CD8-positive, alpha-beta T cell (primary cell): ENCODE measurements at regions of chr16 and their contacts with region 1.

Region 1: GRCh38 chr16:84726079-84726668 is 26.4 kb downstream of the USP10 start:
- DNase-seq: peak; percentile 74 to 92 (median 83)
- ATAC-seq: peak; percentile 76
- H3K4me3 ChIP-seq: no peak overlapping the region
- H3K4me3 Mint-ChIP-seq: peak overlapping the region; percentile 50
- H3K27ac ChIP-seq: no peak overlapping the region
- H3K27ac Mint-ChIP-seq: no peak overlapping the region
- H3K4me1 ChIP-seq: peaks cover 34% of the 10 kb centered on the region
- H3K4me1 Mint-ChIP-seq: peaks cover 64% of the 10 kb centered on the region
- H3K27me3 ChIP-seq: no peaks in the 10 kb centered on the region
- H3K27me3 Mint-ChIP-seq: no peaks in the 10 kb centered on the region
- CTCF ChIP-seq: peak; percentile 98

Region 2: GRCh38 chr16:84647828-84648594 is 78.2 kb before region 1 on chr16 and contains the start of gene KLHL36:
- CTCF ChIA-PET with region 1: interaction called, 18 read pairs
- POLR2A ChIA-PET with region 1: no interaction called
- intact Hi-C with region 1: no loop called
- DNase-seq: peak; percentile 53 to 84 (median 71)
- ATAC-seq: peak; percentile 84
- H3K4me3 ChIP-seq: peak within 1 kb of the TSS; percentile 59 to 63
- H3K4me3 Mint-ChIP-seq: peak within 1 kb of the TSS; percentile 87
- H3K27ac ChIP-seq: peak within 1 kb of the TSS; percentile 44 to 68
- H3K27ac Mint-ChIP-seq: peak within 1 kb of the TSS; percentile 90
- H3K4me1 ChIP-seq: peaks cover 45% of the 10 kb centered on the region
- H3K4me1 Mint-ChIP-seq: peaks cover 44% of the 10 kb centered on the region
- H3K27me3 ChIP-seq: no peaks in the 10 kb centered on the region
- H3K27me3 Mint-ChIP-seq: no peaks in the 10 kb centered on the region
- CTCF ChIP-seq: no peak
- total RNA-seq, gene KLHL36: 50.8 to 56.5 TPM

Region 3: DNA sequence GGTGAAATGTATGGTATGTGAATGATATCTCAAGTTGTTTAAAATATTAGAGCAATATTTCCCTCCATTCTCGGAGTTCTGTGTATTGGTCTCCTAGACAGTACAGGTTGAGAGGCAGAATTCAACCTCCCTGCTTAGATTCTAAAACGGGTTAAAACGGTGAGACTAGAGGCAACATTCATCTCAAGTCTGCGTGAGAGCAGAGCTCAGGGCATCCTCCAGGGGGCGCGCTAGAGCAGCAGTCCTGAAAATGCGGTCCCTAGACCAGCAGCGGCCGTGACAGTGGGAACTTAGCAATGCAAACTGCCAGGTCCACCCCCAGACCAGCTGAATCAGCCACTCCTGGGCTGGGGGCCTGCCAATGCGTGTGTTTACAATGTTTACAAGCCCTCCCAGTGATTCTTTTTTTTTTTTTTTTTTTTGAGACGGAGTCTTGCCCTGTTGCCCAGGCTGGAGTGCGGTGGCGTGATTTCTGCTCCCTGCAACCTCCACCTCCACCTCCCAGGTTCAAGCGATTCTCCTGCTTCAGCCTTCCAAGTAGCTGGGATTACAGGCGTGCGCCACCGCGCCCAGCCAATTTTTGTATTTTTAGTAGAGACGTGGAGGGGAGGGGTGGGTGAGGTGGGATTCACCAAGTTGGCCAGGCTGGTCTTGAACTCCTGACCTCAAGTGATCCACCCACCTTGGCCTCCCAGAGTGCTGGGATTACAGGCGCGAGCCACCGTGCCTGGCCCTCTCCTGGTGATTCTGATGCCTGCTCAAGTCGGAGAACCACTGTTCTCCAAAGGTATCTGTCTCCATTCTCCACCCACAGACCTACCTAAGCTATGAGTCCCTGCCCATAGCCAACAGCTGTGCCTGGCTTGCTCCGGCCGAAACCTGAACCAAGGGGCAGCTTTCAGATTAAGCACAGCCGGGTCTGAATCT is 53.6 kb before region 1 on chr16:
- CTCF ChIA-PET with region 1: interaction called, 49 read pairs
- POLR2A ChIA-PET with region 1: no interaction called
- intact Hi-C with region 1: loop called (anchors 1 kb)
- DNase-seq: peak; percentile 64 to 91 (median 80)
- ATAC-seq: peak; percentile 97
- H3K4me3 ChIP-seq: no peak overlapping the region
- H3K4me3 Mint-ChIP-seq: no peak overlapping the region
- H3K27ac ChIP-seq: no peak overlapping the region
- H3K27ac Mint-ChIP-seq: no peak overlapping the region
- H3K4me1 ChIP-seq: no peaks in the 10 kb centered on the region
- H3K4me1 Mint-ChIP-seq: peaks cover 6% of the 10 kb centered on the region
- H3K27me3 ChIP-seq: no peaks in the 10 kb centered on the region
- H3K27me3 Mint-ChIP-seq: no peaks in the 10 kb centered on the region
- CTCF ChIP-seq: peak; percentile 83

Region 4: DNA sequence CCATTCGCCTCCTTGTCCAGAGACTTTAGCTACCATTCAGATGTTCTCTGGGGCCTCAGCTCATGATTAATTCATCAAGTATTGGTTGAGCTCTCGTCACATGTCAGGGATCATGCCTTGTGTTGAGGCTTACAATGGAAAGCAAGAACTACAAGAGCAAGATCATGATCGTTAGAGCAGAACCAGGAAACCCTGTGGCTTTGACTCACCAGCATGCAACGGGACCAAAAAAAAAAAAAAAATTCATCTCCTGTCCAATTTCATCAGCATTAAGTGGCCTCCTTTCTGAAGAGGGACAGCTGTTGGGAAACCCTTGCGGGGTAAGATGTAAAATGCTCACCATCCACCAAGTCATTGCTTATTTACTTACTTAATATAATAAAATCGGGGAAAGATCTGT is 38.5 kb before region 1 on chr16:
- CTCF ChIA-PET with region 1: interaction called, 15 read pairs
- POLR2A ChIA-PET with region 1: no interaction called
- intact Hi-C with region 1: no loop called
- DNase-seq: peak in 1 of 9 experiments; percentile 15
- ATAC-seq: no peak
- H3K4me3 ChIP-seq: no peak overlapping the region
- H3K4me3 Mint-ChIP-seq: no peak overlapping the region
- H3K27ac ChIP-seq: no peak overlapping the region
- H3K27ac Mint-ChIP-seq: no peak overlapping the region
- H3K4me1 ChIP-seq: no peaks in the 10 kb centered on the region
- H3K4me1 Mint-ChIP-seq: no peaks in the 10 kb centered on the region
- H3K27me3 ChIP-seq: no peaks in the 10 kb centered on the region
- H3K27me3 Mint-ChIP-seq: peaks cover 17% of the 10 kb centered on the region
- CTCF ChIP-seq: no peak

Region 5: DNA sequence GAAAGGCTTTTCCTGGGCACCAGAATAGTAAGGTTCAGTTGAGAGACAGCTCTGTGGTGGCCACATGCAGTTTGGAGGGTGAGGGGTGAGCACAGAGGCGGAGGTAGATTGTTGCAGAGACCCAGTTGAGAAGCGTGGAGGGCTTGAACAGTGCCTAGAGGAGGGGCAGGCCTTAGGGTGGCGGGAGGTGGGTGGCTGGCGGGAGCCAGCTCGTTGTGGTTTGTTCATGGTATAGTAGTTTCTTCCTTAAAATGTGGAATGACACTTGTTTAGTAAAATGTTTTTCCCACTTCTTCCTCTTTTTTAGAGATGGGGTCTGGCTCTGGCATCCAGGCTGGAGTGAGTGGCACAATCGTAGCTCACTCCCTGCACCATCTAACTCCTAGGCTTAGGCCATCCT is 12.1 kb before region 1 on chr16:
- CTCF ChIA-PET with region 1: interaction called, 67 read pairs
- POLR2A ChIA-PET with region 1: interaction called, 3 read pairs
- intact Hi-C with region 1: no loop called
- DNase-seq: no peak
- ATAC-seq: no peak
- H3K4me3 ChIP-seq: no peak overlapping the region
- H3K4me3 Mint-ChIP-seq: no peak overlapping the region
- H3K27ac ChIP-seq: no peak overlapping the region
- H3K27ac Mint-ChIP-seq: peak overlapping the region; percentile 62
- H3K4me1 ChIP-seq: peaks cover 34% of the 10 kb centered on the region
- H3K4me1 Mint-ChIP-seq: peaks cover 87% of the 10 kb centered on the region
- H3K27me3 ChIP-seq: no peaks in the 10 kb centered on the region
- H3K27me3 Mint-ChIP-seq: no peaks in the 10 kb centered on the region
- CTCF ChIP-seq: no peak

Region 6: GRCh38 chr16:84746882-84747281 is 20.7 kb after region 1 on chr16:
- CTCF ChIA-PET with region 1: interaction called, 135 read pairs
- POLR2A ChIA-PET with region 1: no interaction called
- intact Hi-C with region 1: no loop called
- DNase-seq: no peak
- ATAC-seq: no peak
- H3K4me3 ChIP-seq: no peak overlapping the region
- H3K4me3 Mint-ChIP-seq: no peak overlapping the region
- H3K27ac ChIP-seq: no peak overlapping the region
- H3K27ac Mint-ChIP-seq: no peak overlapping the region
- H3K4me1 ChIP-seq: peaks cover 11% of the 10 kb centered on the region
- H3K4me1 Mint-ChIP-seq: peaks cover 33% of the 10 kb centered on the region
- H3K27me3 ChIP-seq: no peaks in the 10 kb centered on the region
- H3K27me3 Mint-ChIP-seq: no peaks in the 10 kb centered on the region
- CTCF ChIP-seq: no peak

Region 7: GRCh38 chr16:84893849-84894599 is 167.8 kb after region 1 on chr16:
- CTCF ChIA-PET with region 1: no interaction called
- POLR2A ChIA-PET with region 1: no interaction called
- intact Hi-C with region 1: no loop called
- DNase-seq: peak in 1 of 9 experiments; percentile 7
- ATAC-seq: no peak
- H3K4me3 ChIP-seq: no peak overlapping the region
- H3K4me3 Mint-ChIP-seq: no peak overlapping the region
- H3K27ac ChIP-seq: no peak overlapping the region
- H3K27ac Mint-ChIP-seq: no peak overlapping the region
- H3K4me1 ChIP-seq: no peaks in the 10 kb centered on the region
- H3K4me1 Mint-ChIP-seq: no peaks in the 10 kb centered on the region
- H3K27me3 ChIP-seq: no peaks in the 10 kb centered on the region
- H3K27me3 Mint-ChIP-seq: peaks cover 17% of the 10 kb centered on the region
- CTCF ChIP-seq: no peak